ENCODE measurements at regions of chr11 and their contacts with region 1.

Region 1: GRCh38 chr11:78045851-78046485 is 17.7 kb upstream of the THRSP start:
- DNase-seq: peak; percentile 62
- H3K4me3 ChIP-seq: peak overlapping the region in 2 of 3 experiments; percentile 23 to 72
- H3K27ac ChIP-seq: no peak overlapping the region
- H3K4me1 ChIP-seq: peaks cover 8% of the 10 kb centered on the region
- H3K27me3 ChIP-seq: no peaks in the 10 kb centered on the region
- CTCF ChIP-seq: peak; percentile 97 to 99
- POLR2A ChIP-seq: no peak

Region 2: GRCh38 chr11:77776455-77776854 is 269.5 kb before region 1 on chr11:
- CTCF ChIA-PET with region 1: interaction called, 11 read pairs
- POLR2A ChIA-PET with region 1: no interaction called
- dilution Hi-C with region 1: no loop called
- intact Hi-C with region 1: loop called (anchors 1 kb)
- DNase-seq: peak; percentile 49
- H3K4me3 ChIP-seq: no peak overlapping the region
- H3K27ac ChIP-seq: no peak overlapping the region
- H3K4me1 ChIP-seq: peaks cover 6% of the 10 kb centered on the region
- H3K27me3 ChIP-seq: no peaks in the 10 kb centered on the region
- CTCF ChIP-seq: peak in 1 of 2 donors; percentile 12
- POLR2A ChIP-seq: no peak

Region 3: GRCh38 chr11:78000193-78000592 is 45.8 kb before region 1 on chr11:
- CTCF ChIA-PET with region 1: interaction called, 28 read pairs
- POLR2A ChIA-PET with region 1: no interaction called
- dilution Hi-C with region 1: no loop called
- intact Hi-C with region 1: loop called (anchors 1 kb)
- DNase-seq: peak; percentile 74
- H3K4me3 ChIP-seq: no peak overlapping the region
- H3K27ac ChIP-seq: no peak overlapping the region
- H3K4me1 ChIP-seq: peaks cover 1% of the 10 kb centered on the region
- H3K27me3 ChIP-seq: peaks cover 0 to 2% of the 10 kb centered on the region in 2 experiments
- CTCF ChIP-seq: peak; percentile 70 to 74
- POLR2A ChIP-seq: no peak

Region 4: DNA sequence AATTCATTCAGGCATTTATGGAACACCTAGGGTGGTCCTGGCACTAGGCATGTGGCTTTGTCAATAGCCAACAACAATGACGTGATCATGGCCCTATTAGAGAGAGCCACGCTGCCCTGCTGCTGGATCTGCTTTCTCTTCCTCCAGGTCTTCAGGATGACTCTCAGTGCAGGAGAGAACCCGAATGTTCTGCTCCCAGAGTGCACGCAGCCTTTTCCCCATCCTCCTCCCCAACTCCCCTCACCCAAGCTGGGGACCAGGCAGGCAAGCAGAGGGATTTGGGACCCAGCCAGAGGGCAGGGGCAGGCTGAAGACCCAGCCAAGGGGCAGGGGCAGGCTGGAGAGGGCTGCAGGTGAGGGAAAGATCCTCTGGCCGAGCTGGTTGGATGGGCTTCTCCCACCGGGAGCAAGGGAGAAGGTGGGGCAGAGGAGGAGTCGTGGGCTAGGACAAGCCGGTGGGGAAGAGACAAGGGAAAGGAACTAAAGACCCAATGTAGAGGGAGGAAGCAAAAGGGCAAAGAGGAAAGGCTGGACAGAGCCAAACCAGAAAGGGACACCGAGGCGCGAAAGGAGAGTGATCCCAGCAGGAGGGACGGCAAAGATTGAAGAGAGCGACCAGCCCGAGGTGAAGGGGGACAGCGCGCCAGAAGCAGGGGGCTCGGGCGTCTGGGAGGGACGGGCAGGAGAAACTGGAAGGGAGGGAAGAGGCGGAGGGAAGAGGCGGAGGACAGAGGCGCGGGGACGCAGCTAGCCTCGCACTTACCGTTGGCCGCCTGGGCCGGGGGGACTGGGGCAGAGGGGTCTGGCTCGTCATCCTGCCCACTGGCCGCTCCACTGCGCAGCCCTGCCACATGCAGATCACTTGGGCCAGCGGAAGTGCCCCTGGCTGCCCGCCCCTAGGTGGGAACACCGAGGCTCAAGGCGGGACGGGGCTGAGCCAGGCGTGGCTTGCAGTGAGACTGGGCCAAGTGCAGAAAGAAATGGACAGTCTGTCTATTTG is 23.3 kb before region 1 on chr11 and contains the start of gene KCTD14:
- CTCF ChIA-PET with region 1: interaction called, 12 read pairs
- POLR2A ChIA-PET with region 1: no interaction called
- dilution Hi-C with region 1: no loop called
- intact Hi-C with region 1: no loop called
- DNase-seq: no peak
- H3K4me3 ChIP-seq: peak within 1 kb of the TSS in 2 of 3 experiments; percentile 31 to 41
- H3K27ac ChIP-seq: no peak within 1 kb of the TSS
- H3K4me1 ChIP-seq: peaks cover 5% of the 10 kb centered on the region
- H3K27me3 ChIP-seq: no peaks in the 10 kb centered on the region
- CTCF ChIP-seq: no peak
- POLR2A ChIP-seq: no peak
- total RNA-seq, gene KCTD14: 1.1 and 1.8 TPM in 2 replicates

Region 5: DNA sequence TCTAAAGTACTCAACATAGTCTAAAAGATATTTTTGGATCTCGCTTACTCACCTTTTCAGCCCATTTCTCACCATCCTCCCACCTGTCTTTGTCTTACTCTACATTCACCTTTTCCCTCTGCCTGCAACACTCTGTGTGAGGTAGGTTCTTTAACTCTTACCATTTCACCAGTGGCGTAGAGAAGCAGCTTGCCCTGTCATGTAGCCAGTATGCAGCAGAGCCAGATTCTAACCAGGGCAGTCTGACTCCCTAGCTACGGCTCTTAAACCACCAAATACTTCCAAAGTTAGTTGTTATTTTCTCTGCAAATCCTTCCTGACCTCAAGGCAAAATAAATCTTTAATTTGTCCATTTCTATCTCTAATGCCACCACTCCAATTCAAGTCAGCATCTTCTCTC is 86.0 kb after region 1 on chr11:
- CTCF ChIA-PET with region 1: no interaction called
- POLR2A ChIA-PET with region 1: no interaction called
- dilution Hi-C with region 1: no loop called
- intact Hi-C with region 1: no loop called
- DNase-seq: no peak
- H3K4me3 ChIP-seq: no peak overlapping the region
- H3K27ac ChIP-seq: no peak overlapping the region
- H3K4me1 ChIP-seq: no peaks in the 10 kb centered on the region
- H3K27me3 ChIP-seq: no peaks in the 10 kb centered on the region
- CTCF ChIP-seq: no peak
- POLR2A ChIP-seq: no peak

Measured in endothelial cell of umbilical vein (primary cell).